Heart left ventricle (tissue), 16 donors: ENCODE measurements at regions of chr7 and their contacts with region 1.

Region 1: DNA sequence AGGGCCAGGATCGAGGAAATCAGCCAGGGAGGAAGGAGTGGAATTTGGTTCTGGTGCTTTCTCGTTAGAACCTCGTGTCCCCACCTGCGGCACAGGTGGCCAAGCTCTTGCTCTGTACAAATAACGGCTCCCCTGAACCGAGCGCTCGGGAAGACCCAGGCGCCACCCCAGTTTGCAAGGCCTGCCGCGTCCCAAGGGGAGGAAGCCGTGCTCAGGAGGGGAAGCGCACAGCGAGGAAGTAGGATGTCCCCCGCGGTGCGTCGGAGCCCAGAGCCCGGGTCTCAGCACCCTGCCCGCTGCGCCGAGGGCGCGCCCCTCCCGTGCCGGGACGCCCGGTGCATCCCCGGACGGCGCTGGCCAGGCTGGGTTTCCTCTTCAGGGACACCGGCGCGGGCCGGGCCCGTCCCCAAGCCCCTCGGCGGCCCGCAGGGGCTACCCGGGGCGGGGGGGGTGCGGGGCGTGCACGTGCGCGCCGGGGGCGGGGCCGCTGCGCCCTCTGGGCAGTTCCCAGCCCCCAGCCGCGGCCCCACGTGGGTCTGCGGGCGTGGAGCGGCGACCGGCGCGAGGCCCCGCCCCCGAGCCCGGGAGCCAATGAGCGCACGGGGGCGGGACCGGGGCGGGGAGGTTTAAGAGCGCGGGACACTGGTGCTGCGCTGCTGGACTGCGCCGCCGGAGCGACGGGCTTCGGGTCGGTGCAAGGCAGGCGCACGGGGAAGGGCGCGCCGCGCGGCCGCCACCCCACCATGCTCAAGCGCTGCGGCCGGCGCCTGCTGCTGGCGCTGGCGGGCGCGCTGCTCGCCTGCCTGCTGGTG is at the start of gene LFNG:
- DNase-seq: peak; percentile 88 to 94 (median 92)
- ATAC-seq: peak; percentile 82 to 91 (median 86)
- H3K4me3 ChIP-seq: peak within 1 kb of the TSS; percentile 38 to 94 (median 71)
- H3K27ac ChIP-seq: peak within 1 kb of the TSS in 10 of 12 donors; percentile 14 to 87 (median 61)
- H3K4me1 ChIP-seq: peaks cover 5 to 60% (median 40%) of the 10 kb centered on the region in 12 donors
- H3K27me3 ChIP-seq: peaks cover 0 to 38% (median 0%) of the 10 kb centered on the region in 9 donors
- CTCF ChIP-seq: no peak
- POLR2A ChIP-seq: peak; percentile 69 to 99
- total RNA-seq, gene LFNG: 3.1 to 22.8 (median 7.7) TPM

Region 2: DNA sequence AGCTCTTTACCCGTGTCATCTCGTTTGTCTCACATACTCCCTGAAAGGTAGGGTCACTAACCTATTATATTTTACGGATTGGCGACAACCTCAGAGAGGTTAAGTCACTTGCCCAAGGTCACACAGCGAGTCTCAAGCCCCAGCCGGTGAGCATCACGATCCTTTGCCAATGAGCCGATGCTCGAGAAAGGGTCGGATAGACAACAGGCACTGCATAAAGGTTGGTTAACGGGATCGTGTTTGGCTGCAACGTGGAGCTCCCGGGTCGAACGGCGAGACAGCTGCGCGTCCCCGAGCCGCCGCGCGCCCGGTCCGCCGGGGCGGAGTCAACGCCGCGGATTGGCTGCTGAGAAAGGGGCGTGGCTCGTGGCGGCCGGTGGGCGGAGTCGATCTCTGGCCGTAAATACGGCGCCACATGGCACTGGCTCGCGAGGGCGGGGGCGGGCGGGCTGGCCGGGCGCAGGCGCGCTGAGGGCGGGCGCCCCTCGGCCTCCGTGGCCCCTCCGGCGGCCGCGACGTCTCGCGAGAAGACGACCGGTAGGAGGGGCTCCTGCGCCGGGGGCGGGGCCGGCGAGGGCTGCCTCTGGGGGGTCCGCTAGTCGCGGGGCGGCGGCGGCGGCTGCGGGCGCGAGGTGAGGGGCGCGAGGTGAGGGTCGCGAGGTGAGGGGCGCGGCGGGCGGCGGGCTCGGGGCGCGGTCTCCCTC is 116.2 kb before region 1 on chr7 and contains the start of gene CHST12:
- intact Hi-C with region 1: no loop called
- DNase-seq: peak; percentile 95 to 97 (median 96)
- ATAC-seq: peak; percentile 84 to 90 (median 89)
- H3K4me3 ChIP-seq: peak within 1 kb of the TSS; percentile 75 to 100 (median 93)
- H3K27ac ChIP-seq: peak within 1 kb of the TSS; percentile 43 to 89 (median 82)
- H3K4me1 ChIP-seq: peaks cover 3 to 74% (median 38%) of the 10 kb centered on the region in 12 donors
- H3K27me3 ChIP-seq: no peaks in the 10 kb centered on the region
- CTCF ChIP-seq: no peak
- POLR2A ChIP-seq: peak in 1 of 2 donors; percentile 67
- total RNA-seq, gene CHST12: 12.7 to 20.7 (median 15.6) TPM

Region 3: DNA sequence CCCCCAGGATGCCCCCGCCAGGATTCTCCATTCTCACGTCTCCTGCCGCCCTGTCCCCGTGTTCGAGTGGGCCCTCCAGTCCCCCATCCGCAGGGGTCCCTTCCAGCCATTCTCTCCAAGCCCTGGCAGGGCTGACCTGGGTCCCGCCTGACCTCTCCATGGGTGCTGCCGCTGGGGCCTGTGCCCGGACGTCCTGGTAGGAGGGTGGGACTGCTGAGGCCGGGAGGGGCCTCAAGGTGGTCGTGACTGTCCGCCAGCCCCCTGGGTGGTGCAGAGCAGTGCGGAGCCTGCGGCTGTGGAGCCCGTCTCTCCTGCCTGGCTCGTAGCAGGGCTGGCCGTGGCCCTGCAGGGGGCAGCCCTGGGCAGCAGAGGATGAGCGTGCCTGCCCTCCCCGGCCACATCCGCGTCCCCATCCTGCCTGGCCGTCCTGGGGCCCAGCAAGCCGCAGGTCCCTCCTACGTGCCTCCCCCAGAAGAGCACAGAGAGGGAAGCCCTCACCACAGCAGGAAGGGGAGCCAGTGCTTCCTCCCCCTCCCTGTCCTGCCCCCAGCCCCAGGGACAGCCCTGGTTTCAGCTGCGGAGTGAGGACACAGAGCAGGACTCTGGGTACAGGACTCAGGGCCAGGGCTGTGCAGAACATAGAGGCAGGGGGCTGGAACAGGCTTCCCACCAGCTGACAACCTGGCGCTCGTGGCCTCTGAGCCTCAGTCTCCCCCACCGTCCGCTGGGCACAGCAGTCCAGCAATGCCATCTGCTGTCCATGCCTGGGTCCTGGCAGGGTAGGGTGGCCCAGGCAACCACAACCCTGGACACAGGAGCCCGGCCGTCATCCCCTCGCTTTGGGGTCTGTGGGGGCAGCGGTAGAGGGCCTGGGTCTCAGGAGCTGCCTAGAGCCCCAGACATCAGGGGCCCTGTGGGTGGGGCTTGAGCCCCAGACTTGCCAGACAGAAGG is 41.6 kb before region 1 on chr7:
- intact Hi-C with region 1: loop called in 6 of 10 experiments (anchors 2 to 5 kb)
- DNase-seq: peak; percentile 66 to 89 (median 72)
- ATAC-seq: peak; percentile 81 to 88 (median 84)
- H3K4me3 ChIP-seq: peak overlapping the region in 1 of 12 donors; percentile 12
- H3K27ac ChIP-seq: peak overlapping the region in 4 of 12 donors; percentile 12 to 47 (median 26)
- H3K4me1 ChIP-seq: peaks cover 4 to 37% (median 29%) of the 10 kb centered on the region in 12 donors
- H3K27me3 ChIP-seq: peaks cover 0 to 29% (median 0%) of the 10 kb centered on the region in 9 donors
- CTCF ChIP-seq: peak; percentile 66 to 83 (median 74)
- POLR2A ChIP-seq: no peak

Region 4: DNA sequence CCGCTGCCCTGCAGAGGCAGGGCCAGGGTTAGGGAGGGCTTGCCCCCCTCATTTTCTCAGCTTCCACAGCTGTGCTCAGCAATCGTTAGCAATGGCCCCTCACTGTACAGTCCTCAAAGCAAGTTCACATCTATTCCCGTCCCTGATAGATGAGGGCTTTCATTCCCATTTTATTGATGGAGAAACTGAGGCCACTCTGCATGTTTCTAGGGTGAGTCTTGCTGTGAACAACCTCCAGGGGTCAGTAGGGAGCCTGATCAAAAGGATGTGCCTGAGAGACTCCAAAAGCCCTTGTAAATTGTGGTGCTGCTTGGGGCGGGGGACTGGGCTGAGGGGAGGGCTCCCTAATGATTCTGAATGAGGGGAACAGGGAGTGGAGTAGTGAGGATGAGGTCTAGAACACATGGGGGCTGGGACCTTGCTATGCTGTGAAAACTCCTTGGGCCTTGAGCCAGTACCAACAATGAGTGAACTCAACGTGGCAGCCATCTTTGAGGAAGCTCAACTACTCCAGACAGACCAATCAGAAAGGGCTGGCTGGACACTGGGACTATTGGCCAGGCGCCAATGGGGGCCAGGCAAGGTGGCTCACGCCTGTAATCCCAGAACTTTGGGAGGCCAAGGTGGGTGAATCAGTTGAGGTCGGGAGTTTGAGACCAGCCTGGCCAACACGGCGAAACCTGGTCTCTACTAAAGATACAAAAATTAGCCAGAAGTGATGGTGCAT is 36.4 kb before region 1 on chr7:
- intact Hi-C with region 1: loop called in 7 of 10 experiments (anchors 2 to 5 kb)
- DNase-seq: peak in 1 of 5 donors; percentile 17
- ATAC-seq: no peak
- H3K4me3 ChIP-seq: no peak overlapping the region
- H3K27ac ChIP-seq: no peak overlapping the region
- H3K4me1 ChIP-seq: peaks cover 7 to 47% (median 29%) of the 10 kb centered on the region in 12 donors
- H3K27me3 ChIP-seq: peaks cover 0 to 8% (median 0%) of the 10 kb centered on the region in 9 donors
- CTCF ChIP-seq: no peak
- POLR2A ChIP-seq: no peak

Region 5: GRCh38 chr7:2567679-2568278 is 48.5 kb after region 1 on chr7:
- intact Hi-C with region 1: no loop called
- DNase-seq: peak in 4 of 5 donors; percentile 43 to 72 (median 48)
- ATAC-seq: peak; percentile 79 to 93 (median 84)
- H3K4me3 ChIP-seq: peak overlapping the region in 2 of 12 donors; percentile 2 to 40
- H3K27ac ChIP-seq: no peak overlapping the region
- H3K4me1 ChIP-seq: peaks cover 0 to 19% (median 9%) of the 10 kb centered on the region in 12 donors
- H3K27me3 ChIP-seq: no peaks in the 10 kb centered on the region
- CTCF ChIP-seq: peak; percentile 46 to 70 (median 60)
- POLR2A ChIP-seq: no peak

Region 6: DNA sequence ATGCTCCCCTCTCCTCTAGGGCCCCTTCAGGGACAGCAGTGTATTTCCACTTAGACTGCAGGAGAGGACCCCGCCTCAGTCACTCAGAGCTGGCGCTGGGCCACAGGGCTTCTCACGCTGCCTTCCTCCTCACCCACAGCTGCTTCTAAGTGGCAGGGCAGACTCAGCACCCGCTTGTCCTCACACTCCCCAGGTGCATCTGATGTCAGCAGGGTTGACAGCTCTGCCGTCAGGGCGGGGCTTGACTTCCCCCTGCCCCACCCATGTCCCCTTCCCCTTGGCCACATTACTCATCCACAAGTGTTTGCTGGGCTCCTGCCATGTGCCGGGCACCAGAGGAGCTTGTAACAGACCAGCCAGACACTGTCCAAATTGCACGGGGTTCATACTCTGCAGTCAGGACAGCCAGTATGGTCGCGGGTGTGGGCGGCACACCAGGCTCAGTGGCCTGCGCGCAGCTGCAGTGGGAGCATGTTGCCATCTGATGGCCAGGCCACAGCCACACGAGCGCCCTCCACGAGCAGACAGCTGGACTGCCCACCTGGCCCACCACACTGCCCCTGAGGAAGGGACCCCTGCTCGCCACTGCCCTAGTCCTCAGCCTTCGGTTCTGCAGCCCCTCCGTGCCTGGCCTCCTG is 83.2 kb after region 1 on chr7:
- intact Hi-C with region 1: no loop called
- DNase-seq: no peak
- ATAC-seq: no peak
- H3K4me3 ChIP-seq: no peak overlapping the region
- H3K27ac ChIP-seq: no peak overlapping the region
- H3K4me1 ChIP-seq: peaks cover 3 to 36% (median 18%) of the 10 kb centered on the region in 12 donors
- H3K27me3 ChIP-seq: no peaks in the 10 kb centered on the region
- CTCF ChIP-seq: no peak
- POLR2A ChIP-seq: no peak

Region 7: DNA sequence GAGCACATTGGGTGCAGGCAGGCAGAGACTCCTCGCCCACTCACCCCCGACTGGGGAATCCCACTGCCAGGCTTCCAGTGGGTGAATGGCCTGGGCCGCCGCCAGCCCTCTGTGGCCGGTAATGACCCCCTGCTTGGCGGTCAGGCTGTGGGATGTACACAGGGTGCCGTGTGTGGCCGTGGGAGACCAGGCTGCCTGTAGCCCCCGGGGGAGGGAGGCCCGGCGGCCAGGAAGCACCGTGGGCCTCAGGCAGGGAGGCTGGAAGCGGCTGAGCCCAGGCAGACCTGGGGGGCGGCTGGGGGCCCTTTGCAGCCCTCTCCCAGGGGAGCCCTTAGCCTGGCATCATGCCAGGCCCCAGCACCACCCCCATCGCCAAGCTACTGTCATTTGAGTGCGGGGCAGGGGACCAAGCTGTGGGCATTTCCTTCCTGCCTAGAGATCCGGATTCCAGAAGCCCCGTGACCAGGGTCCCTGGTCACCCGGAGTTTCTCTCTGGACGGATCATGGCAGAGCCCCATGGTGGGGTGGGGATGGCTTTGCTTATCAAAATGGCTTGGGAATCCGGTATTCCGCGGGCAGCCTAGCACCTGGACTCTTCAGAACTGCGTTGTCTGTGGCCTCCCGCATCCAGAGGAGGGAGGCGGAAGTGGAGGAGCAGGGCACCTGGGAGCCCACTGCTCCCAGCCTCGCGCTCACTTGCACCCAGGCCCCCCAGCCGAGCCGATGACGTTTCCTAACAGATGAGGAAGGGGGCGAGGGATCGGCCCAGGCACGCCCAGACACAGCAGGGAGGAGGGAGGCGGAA is 113.6 kb after region 1 on chr7:
- intact Hi-C with region 1: loop called in 1 of 10 experiments (anchors 5 kb)
- DNase-seq: peak; percentile 66 to 81 (median 73)
- ATAC-seq: peak in 3 of 4 donors; percentile 2 to 13 (median 7)
- H3K4me3 ChIP-seq: peak overlapping the region; percentile 70 to 98 (median 90)
- H3K27ac ChIP-seq: peak overlapping the region; percentile 27 to 95 (median 84)
- H3K4me1 ChIP-seq: peaks cover 3 to 68% (median 55%) of the 10 kb centered on the region in 12 donors
- H3K27me3 ChIP-seq: no peaks in the 10 kb centered on the region
- CTCF ChIP-seq: no peak
- POLR2A ChIP-seq: no peak